Psoas muscle (tissue), 8 donors: ENCODE measurements at regions of chr4 and their contacts with region 1.

Region 1: DNA sequence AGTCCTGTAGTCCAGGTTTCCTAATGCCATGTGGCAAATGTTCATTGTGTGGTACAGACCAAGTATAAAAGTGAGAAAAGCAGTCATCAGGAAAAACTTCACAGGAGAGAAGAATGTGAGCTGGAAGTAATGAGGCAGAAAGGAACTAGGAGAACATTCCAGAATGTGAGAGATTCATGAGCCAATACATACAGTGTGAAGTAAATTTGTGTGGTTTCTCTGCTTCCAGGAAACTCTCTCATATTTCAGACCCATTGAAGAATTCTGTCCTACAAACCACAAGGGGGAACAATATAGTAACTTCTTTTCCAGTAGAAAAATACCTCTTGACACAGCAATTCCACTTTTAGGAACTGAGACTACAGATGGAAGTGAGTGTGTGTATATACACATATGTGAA is 136.5 kb downstream of the RNF150 start:
- DNase-seq: no peak
- ATAC-seq: no peak
- H3K4me3 ChIP-seq: no peak overlapping the region
- H3K27ac ChIP-seq: no peak overlapping the region
- H3K4me1 ChIP-seq: peaks cover 19% of the 10 kb centered on the region
- H3K27me3 ChIP-seq: no peaks in the 10 kb centered on the region
- CTCF ChIP-seq: no peak

Region 2: GRCh38 chr4:141133146-141133998 is 136.6 kb after region 1 on chr4 and contains the start of gene RNF150:
- intact Hi-C with region 1: loop called in 1 of 2 experiments (anchors 10 kb)
- DNase-seq: peak; percentile 69 to 85
- ATAC-seq: peak; percentile 81 to 88 (median 85)
- H3K4me3 ChIP-seq: peak within 1 kb of the TSS; percentile 93
- H3K27ac ChIP-seq: peak within 1 kb of the TSS; percentile 76
- H3K4me1 ChIP-seq: peaks cover 23% of the 10 kb centered on the region
- H3K27me3 ChIP-seq: no peaks in the 10 kb centered on the region
- CTCF ChIP-seq: peak; percentile 75
- total RNA-seq, gene RNF150: 3.2 to 12.6 (median 3.8) TPM